OCI-LY7 (cell line): ENCODE measurements at regions of chr12 and their contacts with region 1.

Region 1: GRCh38 chr12:63706336-63706735 is 38.0 kb upstream of the DPY19L2 start:
- DNase-seq: no peak
- H3K4me3 ChIP-seq: no peak overlapping the region
- H3K27ac ChIP-seq: no peak overlapping the region
- H3K4me1 ChIP-seq: no peaks in the 10 kb centered on the region
- CTCF ChIP-seq: no peak

Region 2: GRCh38 chr12:63396135-63396534 is 310.2 kb before region 1 on chr12:
- CTCF ChIA-PET with region 1: no interaction called
- POLR2A ChIA-PET with region 1: no interaction called
- intact Hi-C with region 1: no loop called
- DNase-seq: no peak
- H3K4me3 ChIP-seq: no peak overlapping the region
- H3K27ac ChIP-seq: no peak overlapping the region
- H3K4me1 ChIP-seq: no peaks in the 10 kb centered on the region
- CTCF ChIP-seq: no peak

Region 3: DNA sequence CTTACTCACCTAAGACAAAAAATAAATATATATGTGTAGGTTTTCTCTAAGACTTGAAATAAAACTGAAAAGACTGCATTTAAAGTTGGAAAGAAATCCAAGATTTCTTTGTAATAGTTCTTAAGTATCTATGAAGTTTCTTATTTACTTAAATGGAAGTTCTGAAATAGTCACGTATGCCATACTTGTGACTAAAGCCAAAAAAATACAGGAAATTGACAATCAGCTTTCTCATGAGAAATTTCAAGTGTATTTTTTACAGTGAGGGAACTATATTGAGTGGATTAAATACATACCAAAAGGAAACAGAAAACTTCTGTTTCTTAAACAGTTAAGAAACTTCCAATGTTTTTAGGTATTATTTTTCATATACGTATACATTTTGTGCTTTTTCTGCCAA is 226.2 kb before region 1 on chr12:
- CTCF ChIA-PET with region 1: no interaction called
- POLR2A ChIA-PET with region 1: interaction called, 10 read pairs
- intact Hi-C with region 1: no loop called
- DNase-seq: no peak
- H3K4me3 ChIP-seq: no peak overlapping the region
- H3K27ac ChIP-seq: no peak overlapping the region
- H3K4me1 ChIP-seq: no peaks in the 10 kb centered on the region
- CTCF ChIP-seq: no peak

Region 4: GRCh38 chr12:63753744-63754143 is 47.4 kb after region 1 on chr12:
- CTCF ChIA-PET with region 1: no interaction called
- POLR2A ChIA-PET with region 1: no interaction called
- intact Hi-C with region 1: no loop called
- DNase-seq: no peak
- H3K4me3 ChIP-seq: no peak overlapping the region
- H3K27ac ChIP-seq: no peak overlapping the region
- H3K4me1 ChIP-seq: no peaks in the 10 kb centered on the region
- CTCF ChIP-seq: no peak